Activated CD4-positive, alpha-beta memory T cell treated with anti-CD3 and anti-CD28 coated beads, Interleukin-2, amount 10 ng/mL, durations not matched to agents 7 days and 5 days (primary cell): ENCODE measurements at regions of chr15 and their contacts with region 1.

Region 1: DNA sequence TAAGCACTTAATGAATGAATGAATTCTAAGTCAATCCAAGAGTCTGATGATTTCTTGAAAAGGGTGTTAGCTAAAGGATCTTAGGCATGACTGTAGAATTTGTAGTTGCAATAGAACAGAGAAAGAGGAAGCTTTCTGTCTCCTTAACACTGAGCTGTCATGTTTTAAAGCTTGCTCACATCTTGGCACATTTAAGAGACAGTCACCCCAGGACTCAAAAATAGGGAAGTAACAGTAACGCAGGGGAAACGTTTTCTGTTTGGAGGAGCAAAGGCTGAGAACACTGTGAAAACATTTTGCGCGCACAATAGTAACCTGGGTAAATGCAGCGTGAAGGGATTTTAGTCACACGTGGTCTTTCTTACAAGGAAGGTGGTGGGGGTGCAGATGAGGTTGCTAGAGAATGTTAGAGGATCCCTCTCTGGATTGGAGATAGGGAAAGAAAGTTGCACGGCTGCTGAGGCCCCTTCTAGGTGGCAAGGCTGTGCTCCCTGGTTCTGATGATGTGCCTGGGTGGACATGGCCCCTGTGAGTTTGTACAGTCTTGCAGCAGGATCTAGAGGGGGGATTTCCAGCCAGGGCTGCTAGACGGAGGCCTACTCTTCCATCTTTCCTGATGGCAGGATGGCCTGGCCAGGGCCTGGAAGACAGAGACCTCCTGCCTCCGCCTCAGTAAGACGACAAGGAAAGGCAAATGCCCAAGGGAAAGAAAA is 12.0 kb downstream of the STARD5 start:
- DNase-seq: no peak
- H3K4me3 Mint-ChIP-seq: no peak overlapping the region
- H3K27ac Mint-ChIP-seq: peak overlapping the region; percentile 11
- H3K4me1 Mint-ChIP-seq: peaks cover 20% of the 10 kb centered on the region
- H3K27me3 Mint-ChIP-seq: no peaks in the 10 kb centered on the region

Region 2: GRCh38 chr15:81296673-81297072 is 15.2 kb before region 1 on chr15:
- CTCF ChIA-PET with region 1: interaction called, 5 read pairs
- POLR2A ChIA-PET with region 1: interaction called, 35 read pairs
- DNase-seq: peak; percentile 87
- H3K4me3 Mint-ChIP-seq: peak overlapping the region; percentile 98
- H3K27ac Mint-ChIP-seq: peak overlapping the region; percentile 96
- H3K4me1 Mint-ChIP-seq: peaks cover 64% of the 10 kb centered on the region
- H3K27me3 Mint-ChIP-seq: no peaks in the 10 kb centered on the region

Region 3: DNA sequence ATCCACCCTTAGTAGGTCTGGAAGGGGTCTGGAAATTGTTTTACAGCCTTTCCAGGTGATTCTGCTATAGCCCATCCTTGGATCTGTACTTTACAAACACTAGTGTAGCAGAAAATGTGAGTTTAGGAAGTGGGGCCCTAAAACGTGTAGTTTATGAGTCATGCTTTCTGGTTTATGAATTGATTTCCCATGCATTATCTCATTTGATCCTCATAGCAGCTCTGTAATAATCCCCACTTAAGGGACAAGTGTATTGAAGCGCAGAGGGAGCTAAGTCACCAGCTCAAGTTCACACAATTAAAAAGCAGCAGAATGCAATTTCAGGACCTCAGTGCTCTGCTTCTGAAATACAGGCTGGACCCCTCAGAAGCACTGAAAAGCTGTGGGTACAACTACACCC is 34.7 kb after region 1 on chr15:
- CTCF ChIA-PET with region 1: no interaction called
- POLR2A ChIA-PET with region 1: no interaction called
- DNase-seq: no peak
- H3K4me3 Mint-ChIP-seq: no peak overlapping the region
- H3K27ac Mint-ChIP-seq: no peak overlapping the region
- H3K4me1 Mint-ChIP-seq: no peaks in the 10 kb centered on the region
- H3K27me3 Mint-ChIP-seq: peaks cover 4% of the 10 kb centered on the region